ENCODE measurements at regions of chr1 and their contacts with region 1.

Region 1: DNA sequence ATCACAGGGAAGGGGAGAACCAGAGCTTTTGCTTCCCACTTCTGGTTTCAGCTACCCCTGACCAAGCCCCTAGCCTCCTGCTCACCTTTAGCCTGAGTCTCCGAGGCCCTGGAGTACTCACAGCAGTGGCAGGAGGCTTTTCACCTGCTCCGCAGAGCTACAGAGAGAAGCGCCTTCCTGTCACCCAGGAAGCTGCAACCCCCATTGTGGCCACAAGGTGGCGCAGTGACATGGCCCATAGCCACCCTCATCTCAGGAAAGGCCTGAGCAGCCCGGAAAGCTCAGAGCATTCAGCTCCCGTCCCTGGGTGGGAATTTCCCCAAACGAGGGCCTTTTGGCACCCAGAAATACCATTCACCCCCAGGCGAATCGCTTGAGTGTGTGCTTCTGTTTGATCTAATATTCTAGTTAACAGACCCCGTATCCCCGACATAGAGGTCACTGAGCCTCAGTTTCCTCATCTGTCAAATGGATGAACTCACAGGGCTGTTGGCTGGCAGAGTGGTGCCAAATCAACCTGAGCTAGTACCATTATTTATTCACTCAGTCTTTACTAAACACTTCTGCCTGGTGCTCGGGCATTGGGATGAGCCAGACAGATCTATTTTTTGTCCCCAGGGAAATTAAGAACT is 25.3 kb downstream of the A3GALT2 start:
- DNase-seq: peak; percentile 88
- H3K4me3 ChIP-seq: no peak overlapping the region
- H3K27ac ChIP-seq: peak overlapping the region; percentile 53
- H3K4me1 ChIP-seq: peaks cover 29% of the 10 kb centered on the region
- H3K27me3 ChIP-seq: no peaks in the 10 kb centered on the region
- CTCF ChIP-seq: peak; percentile 98

Region 2: DNA sequence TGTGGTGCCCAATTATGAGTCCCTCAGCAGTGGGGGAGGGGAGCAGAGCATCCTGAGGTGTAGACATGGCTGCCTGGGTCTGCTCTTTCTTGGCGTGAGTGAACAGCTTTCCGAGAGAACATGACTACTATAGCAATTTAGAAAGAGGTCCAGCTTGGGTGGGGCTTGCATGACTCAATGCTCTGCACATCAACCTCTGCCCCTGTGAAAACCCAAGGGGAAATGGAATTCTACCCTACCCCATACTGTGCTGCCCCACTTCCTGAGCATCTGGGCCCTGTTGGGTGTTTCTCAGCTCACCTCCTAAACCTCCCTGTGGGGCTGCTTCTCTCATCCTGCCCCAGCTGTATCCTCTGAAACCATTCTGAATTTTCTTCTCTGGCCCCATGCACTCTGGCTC is 222.9 kb before region 1 on chr1:
- intact Hi-C with region 1: no loop called
- DNase-seq: no peak
- H3K4me3 ChIP-seq: no peak overlapping the region
- H3K27ac ChIP-seq: no peak overlapping the region
- H3K4me1 ChIP-seq: no peaks in the 10 kb centered on the region
- H3K27me3 ChIP-seq: no peaks in the 10 kb centered on the region
- CTCF ChIP-seq: no peak

Region 3: GRCh38 chr1:33367485-33368405 is 72.2 kb after region 1 on chr1:
- intact Hi-C with region 1: loop called (anchors 5 kb)
- DNase-seq: peak; percentile 86
- H3K4me3 ChIP-seq: no peak overlapping the region
- H3K27ac ChIP-seq: peak overlapping the region; percentile 91
- H3K4me1 ChIP-seq: peaks cover 74% of the 10 kb centered on the region
- H3K27me3 ChIP-seq: no peaks in the 10 kb centered on the region
- CTCF ChIP-seq: peak; percentile 99

Region 4: GRCh38 chr1:33460947-33461629 is 165.5 kb after region 1 on chr1:
- intact Hi-C with region 1: loop called (anchors 10 kb)
- DNase-seq: peak; percentile 55
- H3K4me3 ChIP-seq: peak overlapping the region; percentile 42
- H3K27ac ChIP-seq: peak overlapping the region; percentile 87
- H3K4me1 ChIP-seq: peaks cover 45% of the 10 kb centered on the region
- H3K27me3 ChIP-seq: no peaks in the 10 kb centered on the region
- CTCF ChIP-seq: no peak

Measured in left ventricle myocardium inferior (tissue), 1 donor.